ENCODE measurements at regions of chr1 and their contacts with region 1.

Region 1: DNA sequence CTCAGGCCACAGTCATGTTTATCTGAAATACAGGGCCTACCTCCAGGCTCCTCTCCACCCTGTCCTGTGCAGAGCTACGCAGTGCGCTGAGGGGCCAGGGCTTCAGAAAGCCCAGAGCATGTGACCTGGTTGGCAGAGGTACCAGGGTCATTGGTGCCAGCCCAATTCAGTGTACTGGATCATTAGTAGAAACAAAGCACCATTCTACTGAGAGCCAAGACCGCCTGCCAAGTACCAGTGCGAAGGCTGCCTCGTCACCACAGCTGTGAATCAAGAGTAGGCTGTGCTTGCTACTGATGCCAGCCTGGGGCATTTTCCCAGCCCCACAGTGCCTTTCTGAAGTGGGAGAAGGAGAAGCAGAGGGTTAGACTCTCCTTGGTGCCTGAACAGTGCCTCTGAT is 59.8 kb downstream of the CAPN9 start:
- DNase-seq: peak; percentile 69 to 80 (median 79)
- ATAC-seq: peak; percentile 93 to 94
- H3K4me3 ChIP-seq: no peak overlapping the region
- H3K27ac ChIP-seq: peak overlapping the region; percentile 75
- H3K4me1 ChIP-seq: peaks cover 12% of the 10 kb centered on the region
- H3K27me3 ChIP-seq: no peaks in the 10 kb centered on the region

Region 2: GRCh38 chr1:230426246-230427093 is 380.6 kb before region 1 on chr1 and contains the start of gene PGBD5:
- intact Hi-C with region 1: no loop called
- DNase-seq: peak; percentile 71 to 89 (median 87)
- ATAC-seq: peak; percentile 96 to 97
- H3K4me3 ChIP-seq: peak within 1 kb of the TSS; percentile 90
- H3K27ac ChIP-seq: no peak within 1 kb of the TSS
- H3K4me1 ChIP-seq: no peaks in the 10 kb centered on the region
- H3K27me3 ChIP-seq: no peaks in the 10 kb centered on the region
- total RNA-seq, gene PGBD5: 25.2 to 32.6 (median 28.1) TPM

Region 3: GRCh38 chr1:230867903-230868735 is 61.1 kb after region 1 on chr1 and contains the start of gene C1orf198:
- intact Hi-C with region 1: loop called in 1 of 4 experiments (anchors 10 kb)
- DNase-seq: peak; percentile 72 to 93 (median 90)
- ATAC-seq: peak; percentile 93 to 94
- H3K4me3 ChIP-seq: peak within 1 kb of the TSS; percentile 97
- H3K27ac ChIP-seq: peak within 1 kb of the TSS; percentile 93
- H3K4me1 ChIP-seq: peaks cover 19% of the 10 kb centered on the region
- H3K27me3 ChIP-seq: no peaks in the 10 kb centered on the region
- total RNA-seq, gene C1orf198: 48.0 to 69.9 (median 56.2) TPM

Region 4: DNA sequence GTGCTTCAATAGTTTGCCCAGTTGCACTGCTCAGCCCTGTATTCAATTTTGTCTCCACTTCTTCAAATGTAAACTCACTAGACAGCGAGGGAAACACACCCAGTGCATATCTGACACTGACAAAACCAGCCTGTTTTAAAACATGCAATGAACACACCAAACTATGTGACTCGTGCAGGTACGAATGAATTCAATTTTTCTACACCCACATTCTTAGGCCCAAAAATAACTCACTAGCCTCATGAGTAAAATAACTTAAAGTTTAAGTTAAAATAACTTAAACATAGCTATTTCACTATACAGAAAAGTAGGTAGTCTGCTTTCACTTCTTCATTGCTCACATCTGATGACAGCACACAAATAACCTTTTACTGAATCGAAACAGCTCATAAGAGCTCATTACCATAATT is 150.6 kb after region 1 on chr1:
- intact Hi-C with region 1: no loop called
- DNase-seq: no peak
- ATAC-seq: no peak
- H3K4me3 ChIP-seq: no peak overlapping the region
- H3K27ac ChIP-seq: no peak overlapping the region
- H3K4me1 ChIP-seq: no peaks in the 10 kb centered on the region
- H3K27me3 ChIP-seq: no peaks in the 10 kb centered on the region